Mammary epithelial cell (primary cell): ENCODE measurements at regions of chr11 and their contacts with region 1.

Region 1: GRCh38 chr11:36091256-36091811 is 147.5 kb downstream of the LDLRAD3 start:
- DNase-seq: peak; percentile 9
- H3K4me3 ChIP-seq: no peak overlapping the region
- H3K27ac ChIP-seq: no peak overlapping the region
- H3K4me1 ChIP-seq: no peaks in the 10 kb centered on the region
- H3K27me3 ChIP-seq: no peaks in the 10 kb centered on the region
- CTCF ChIP-seq: no peak

Region 2: GRCh38 chr11:35671396-35672127 is 419.8 kb before region 1 on chr11:
- CTCF ChIA-PET with region 1: interaction called, 14 read pairs
- dilution Hi-C with region 1: no loop called
- in situ Hi-C with region 1: no loop called
- intact Hi-C with region 1: no loop called
- DNase-seq: no peak
- H3K4me3 ChIP-seq: no peak overlapping the region
- H3K27ac ChIP-seq: no peak overlapping the region
- H3K4me1 ChIP-seq: peaks cover 19% of the 10 kb centered on the region
- H3K27me3 ChIP-seq: no peaks in the 10 kb centered on the region
- CTCF ChIP-seq: no peak

Region 3: GRCh38 chr11:36009473-36009872 is 81.9 kb before region 1 on chr11:
- CTCF ChIA-PET with region 1: no interaction called
- dilution Hi-C with region 1: no loop called
- in situ Hi-C with region 1: no loop called
- intact Hi-C with region 1: no loop called
- DNase-seq: peak; percentile 51
- H3K4me3 ChIP-seq: no peak overlapping the region
- H3K27ac ChIP-seq: peak overlapping the region; percentile 47
- H3K4me1 ChIP-seq: peaks cover 56% of the 10 kb centered on the region
- H3K27me3 ChIP-seq: no peaks in the 10 kb centered on the region
- CTCF ChIP-seq: no peak

Region 4: DNA sequence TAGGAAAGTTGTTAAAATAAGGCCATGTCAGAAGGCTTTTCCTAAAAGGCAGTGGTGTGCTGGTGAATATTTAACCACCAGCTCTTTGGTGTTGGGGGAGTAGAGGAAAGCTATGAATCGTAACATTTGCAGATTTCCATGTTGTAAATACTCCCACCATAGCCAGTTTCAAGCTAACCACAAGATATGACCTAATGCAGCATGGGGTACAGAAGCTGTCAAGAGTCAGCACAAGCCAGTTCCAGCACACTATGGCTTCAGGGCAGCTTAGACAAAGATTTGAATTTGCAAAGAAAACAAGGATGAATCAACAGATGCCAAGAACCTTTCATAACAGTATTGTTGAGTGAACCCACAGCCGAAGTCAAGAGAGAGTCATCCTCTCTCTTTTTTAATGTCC is 157.9 kb after region 1 on chr11:
- CTCF ChIA-PET with region 1: no interaction called
- dilution Hi-C with region 1: no loop called
- in situ Hi-C with region 1: no loop called
- intact Hi-C with region 1: no loop called
- DNase-seq: peak; percentile 93
- H3K4me3 ChIP-seq: no peak overlapping the region
- H3K27ac ChIP-seq: no peak overlapping the region
- H3K4me1 ChIP-seq: peaks cover 11% of the 10 kb centered on the region
- H3K27me3 ChIP-seq: no peaks in the 10 kb centered on the region
- CTCF ChIP-seq: no peak